Mammary epithelial cell (primary cell): ENCODE measurements at regions of chr2 and their contacts with region 1.

Region 1: GRCh38 chr2:95314964-95315611 is 17.9 kb downstream of the KCNIP3 start:
- DNase-seq: peak; percentile 62
- H3K4me3 ChIP-seq: no peak overlapping the region
- H3K27ac ChIP-seq: no peak overlapping the region
- H3K4me1 ChIP-seq: peaks cover 28% of the 10 kb centered on the region
- H3K27me3 ChIP-seq: peaks cover 3% of the 10 kb centered on the region
- CTCF ChIP-seq: peak; percentile 69 to 95

Region 2: GRCh38 chr2:95022309-95023221 is 292.5 kb before region 1 on chr2:
- CTCF ChIA-PET with region 1: no interaction called
- dilution Hi-C with region 1: no loop called
- in situ Hi-C with region 1: no loop called
- intact Hi-C with region 1: loop called (anchors 2 kb)
- DNase-seq: peak; percentile 53
- H3K4me3 ChIP-seq: no peak overlapping the region
- H3K27ac ChIP-seq: no peak overlapping the region
- H3K4me1 ChIP-seq: no peaks in the 10 kb centered on the region
- H3K27me3 ChIP-seq: peaks cover 14% of the 10 kb centered on the region
- CTCF ChIP-seq: peak; percentile 95 to 96

Region 3: GRCh38 chr2:95225658-95226057 is 89.4 kb before region 1 on chr2:
- CTCF ChIA-PET with region 1: interaction called, 8 read pairs
- dilution Hi-C with region 1: no loop called
- in situ Hi-C with region 1: loop called in 1 of 2 experiments (anchors 5 kb)
- intact Hi-C with region 1: no loop called
- DNase-seq: no peak
- H3K4me3 ChIP-seq: no peak overlapping the region
- H3K27ac ChIP-seq: no peak overlapping the region
- H3K4me1 ChIP-seq: no peaks in the 10 kb centered on the region
- H3K27me3 ChIP-seq: no peaks in the 10 kb centered on the region
- CTCF ChIP-seq: no peak

Region 4: DNA sequence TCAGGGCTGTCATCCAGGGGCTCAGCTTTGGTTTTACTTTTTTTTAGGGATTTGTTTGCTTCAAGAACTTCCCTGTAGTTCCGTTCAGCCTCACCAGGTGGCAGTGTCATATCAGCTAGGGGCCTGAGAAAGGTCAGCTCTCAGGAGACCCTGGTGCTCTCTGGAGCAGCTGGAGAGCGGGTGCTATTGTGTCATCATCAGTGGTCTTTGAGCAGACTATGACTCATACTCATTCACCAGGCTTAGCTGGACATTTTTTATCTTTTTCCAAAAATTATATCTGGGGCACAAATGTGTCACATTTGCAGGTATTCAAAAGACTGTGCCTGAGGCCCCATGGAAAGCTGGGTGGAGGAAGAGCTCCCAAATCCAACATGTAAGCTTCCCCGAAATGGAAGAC is 83.4 kb before region 1 on chr2:
- CTCF ChIA-PET with region 1: interaction called, 8 read pairs
- dilution Hi-C with region 1: no loop called
- in situ Hi-C with region 1: loop called (anchors 5 kb)
- intact Hi-C with region 1: loop called (anchors 1 kb)
- DNase-seq: peak; percentile 57
- H3K4me3 ChIP-seq: no peak overlapping the region
- H3K27ac ChIP-seq: no peak overlapping the region
- H3K4me1 ChIP-seq: peaks cover 8% of the 10 kb centered on the region
- H3K27me3 ChIP-seq: no peaks in the 10 kb centered on the region
- CTCF ChIP-seq: peak; percentile 94 to 99

Region 5: DNA sequence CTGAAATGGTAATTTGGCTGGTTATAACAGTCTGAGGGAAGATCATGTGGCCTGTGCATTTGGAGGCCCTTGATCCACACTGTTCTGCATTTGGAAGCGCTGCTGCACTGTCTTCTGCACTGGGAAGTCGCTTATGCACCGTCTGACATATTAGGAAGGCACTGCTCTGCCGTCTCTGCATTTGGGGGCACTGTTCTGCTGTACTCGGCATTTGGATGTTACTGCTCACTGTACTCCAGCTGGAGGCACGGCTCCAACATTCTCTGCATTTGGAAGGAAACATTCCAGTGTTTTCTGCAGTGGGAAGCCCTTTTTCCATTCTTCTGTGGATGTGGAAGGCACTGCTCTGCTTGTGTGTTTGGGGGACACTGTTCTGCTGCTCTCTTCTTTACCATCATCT is 50.5 kb before region 1 on chr2:
- CTCF ChIA-PET with region 1: no interaction called
- dilution Hi-C with region 1: no loop called
- in situ Hi-C with region 1: no loop called
- intact Hi-C with region 1: loop called (anchors 1 kb)
- DNase-seq: no peak
- H3K4me3 ChIP-seq: no peak overlapping the region
- H3K27ac ChIP-seq: no peak overlapping the region
- H3K4me1 ChIP-seq: peaks cover 19% of the 10 kb centered on the region
- H3K27me3 ChIP-seq: no peaks in the 10 kb centered on the region
- CTCF ChIP-seq: no peak

Region 6: DNA sequence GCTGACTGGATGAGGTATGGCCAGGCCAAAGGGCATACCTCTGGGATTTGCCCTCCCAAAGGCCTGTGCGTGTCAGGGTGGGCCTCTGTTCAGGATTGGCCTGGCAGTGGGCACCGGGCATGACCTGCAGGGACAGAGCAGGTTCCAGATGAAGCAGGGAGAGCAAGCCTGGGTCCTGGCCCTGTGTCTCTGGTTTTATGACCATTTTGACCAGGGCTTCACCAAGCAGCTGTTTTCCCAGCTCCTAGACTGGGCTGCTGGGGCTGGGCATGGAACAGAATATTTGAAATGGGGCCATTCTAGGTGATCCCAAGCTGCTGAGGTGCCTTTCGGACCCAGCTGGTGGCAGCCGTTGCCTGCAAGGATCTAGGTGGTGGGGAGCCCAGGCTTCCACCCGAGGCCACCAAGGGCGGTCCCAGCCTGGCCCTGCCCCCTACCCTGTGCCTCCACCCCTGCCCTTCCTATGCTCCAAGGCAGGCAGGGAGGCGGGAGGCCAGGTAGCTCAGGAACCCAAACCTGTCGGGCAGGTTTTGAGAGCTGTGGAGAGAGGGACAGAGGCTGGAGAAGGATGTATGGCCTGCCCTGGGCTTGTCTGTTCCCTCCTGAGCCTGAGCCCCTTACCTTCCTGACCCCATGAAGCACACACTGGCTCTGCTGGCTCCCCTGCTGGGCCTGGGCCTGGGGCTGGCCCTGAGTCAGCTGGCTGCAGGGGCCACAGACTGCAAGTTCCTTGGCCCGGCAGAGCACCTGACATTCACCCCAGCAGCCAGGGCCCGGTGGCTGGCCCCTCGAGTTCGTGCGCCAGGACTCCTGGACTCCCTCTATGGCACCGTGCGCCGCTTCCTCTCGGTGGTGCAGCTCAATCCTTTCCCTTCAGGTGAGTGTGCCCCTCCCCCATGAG is 40.9 kb before region 1 on chr2 and contains the start of gene PROM2:
- CTCF ChIA-PET with region 1: interaction called, 4 read pairs
- dilution Hi-C with region 1: no loop called
- in situ Hi-C with region 1: no loop called
- intact Hi-C with region 1: loop called (anchors 1 kb)
- DNase-seq: peak; percentile 84
- H3K4me3 ChIP-seq: peak within 1 kb of the TSS; percentile 23 to 62 (median 58)
- H3K27ac ChIP-seq: peak within 1 kb of the TSS; percentile 40
- H3K4me1 ChIP-seq: peaks cover 56% of the 10 kb centered on the region
- H3K27me3 ChIP-seq: no peaks in the 10 kb centered on the region
- CTCF ChIP-seq: no peak
- total RNA-seq, gene PROM2: 27.3 to 73.5 TPM

Region 7: DNA sequence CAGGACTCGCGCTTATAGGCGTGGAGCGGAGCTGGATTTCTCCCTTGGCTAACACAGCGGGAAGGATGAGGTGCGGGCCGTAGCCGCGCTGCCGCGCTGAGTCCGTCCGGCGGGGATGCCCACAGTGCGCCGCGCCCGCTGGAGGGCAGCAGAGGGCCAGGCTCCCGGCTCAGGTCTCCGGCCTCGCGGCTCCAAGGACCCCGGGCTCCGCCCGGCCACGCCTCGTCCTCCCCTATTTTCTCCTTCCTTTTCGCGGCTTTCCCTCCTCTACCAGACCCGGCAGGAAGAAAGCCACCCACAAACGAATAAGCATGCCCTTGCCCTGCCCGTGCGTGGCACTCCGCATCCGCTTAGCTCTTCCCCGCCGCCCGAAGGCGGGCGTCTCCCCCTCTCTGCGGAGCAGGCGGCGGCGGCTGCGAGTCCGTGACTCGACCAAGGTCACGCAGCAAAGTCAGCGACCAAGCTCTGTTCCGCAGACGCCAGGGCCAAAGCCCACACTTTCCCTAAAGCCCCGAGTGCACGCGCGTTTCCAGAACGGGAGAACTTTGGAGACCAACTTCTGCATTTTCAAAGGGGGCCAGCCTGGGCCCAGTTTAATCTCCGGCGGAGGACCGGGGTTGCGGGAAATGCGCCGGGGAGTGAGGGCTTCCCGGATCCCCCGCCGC is 30.6 kb after region 1 on chr2:
- CTCF ChIA-PET with region 1: interaction called, 3 read pairs
- dilution Hi-C with region 1: no loop called
- in situ Hi-C with region 1: no loop called
- intact Hi-C with region 1: loop called (anchors 1 kb)
- DNase-seq: peak; percentile 77
- H3K4me3 ChIP-seq: peak overlapping the region; percentile 49 to 69 (median 61)
- H3K27ac ChIP-seq: peak overlapping the region; percentile 10
- H3K4me1 ChIP-seq: peaks cover 41% of the 10 kb centered on the region
- H3K27me3 ChIP-seq: no peaks in the 10 kb centered on the region
- CTCF ChIP-seq: peak; percentile 65 to 91